Cardiac septum (tissue), 1 donor: ENCODE measurements at regions of chr20 and their contacts with region 1.

Region 1: GRCh38 chr20:40689943-40690835 is 1.2 kb upstream of the MAFB start:
- DNase-seq: peak; percentile 94

Region 2: DNA sequence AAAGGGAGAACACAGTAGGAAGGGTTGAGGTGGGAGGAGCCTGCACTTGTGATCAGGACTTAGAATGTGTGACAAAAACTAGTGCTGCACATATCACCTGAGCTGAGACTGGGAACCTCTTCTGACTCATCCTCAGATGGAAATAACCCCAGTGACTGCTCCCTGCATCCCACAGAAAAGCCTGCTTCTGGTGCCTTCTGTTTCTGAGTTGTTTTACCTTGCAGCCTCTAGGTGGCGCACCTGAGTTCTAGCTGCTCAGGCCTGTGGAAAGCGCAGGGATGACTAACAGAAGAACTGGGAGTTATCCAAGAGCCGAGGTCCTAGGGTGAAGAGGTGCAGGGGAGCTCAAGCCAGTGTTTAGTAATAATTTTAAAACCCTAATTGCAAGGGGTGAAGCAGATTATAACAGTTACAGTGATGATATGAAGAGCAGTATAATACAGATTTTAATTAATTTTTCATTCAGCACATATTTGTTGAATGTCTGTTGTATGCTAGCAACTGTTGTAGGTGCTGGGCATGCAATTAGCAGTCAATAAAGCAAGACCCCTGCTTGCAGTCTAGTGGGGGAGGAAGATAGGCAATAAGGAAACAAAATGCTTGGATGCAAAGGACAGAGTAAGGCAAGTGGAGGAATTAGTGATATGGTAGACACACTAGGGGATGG is 1425.5 kb before region 1 on chr20:
- intact Hi-C with region 1: loop called (anchors 5 kb)
- DNase-seq: no peak

Region 3: DNA sequence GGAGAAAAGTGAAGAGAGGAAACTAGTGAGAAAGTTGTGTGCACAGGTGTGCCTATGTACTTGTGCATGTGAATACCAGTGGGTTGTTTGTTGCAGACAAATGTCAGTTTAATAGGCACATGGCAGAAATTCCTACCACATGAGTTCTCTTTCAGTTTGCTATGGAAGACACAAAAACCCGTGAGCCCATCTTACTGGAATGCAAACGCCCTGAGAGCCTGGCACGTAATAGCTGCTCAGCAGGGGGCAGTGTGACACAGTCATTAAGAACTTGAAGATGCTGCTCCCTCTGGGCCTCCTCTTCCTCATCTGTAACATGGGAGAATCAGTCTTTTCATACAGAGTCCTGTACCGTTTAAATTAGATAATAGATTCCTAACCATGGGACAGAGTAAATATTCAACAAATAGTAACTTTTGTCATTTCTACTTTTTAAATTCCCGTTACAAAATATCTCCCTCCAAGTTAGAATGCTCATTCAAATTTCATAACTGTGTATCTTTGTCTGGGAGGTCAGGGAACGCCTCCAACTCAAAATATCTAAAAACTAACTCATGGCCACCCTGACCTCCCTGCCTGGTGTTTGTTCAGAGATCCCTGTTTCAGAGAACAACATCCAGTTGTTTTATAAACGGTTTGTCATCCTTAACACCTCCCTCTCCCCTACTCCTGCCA is 804.1 kb before region 1 on chr20:
- intact Hi-C with region 1: loop called (anchors 2 kb)
- DNase-seq: no peak

Region 4: DNA sequence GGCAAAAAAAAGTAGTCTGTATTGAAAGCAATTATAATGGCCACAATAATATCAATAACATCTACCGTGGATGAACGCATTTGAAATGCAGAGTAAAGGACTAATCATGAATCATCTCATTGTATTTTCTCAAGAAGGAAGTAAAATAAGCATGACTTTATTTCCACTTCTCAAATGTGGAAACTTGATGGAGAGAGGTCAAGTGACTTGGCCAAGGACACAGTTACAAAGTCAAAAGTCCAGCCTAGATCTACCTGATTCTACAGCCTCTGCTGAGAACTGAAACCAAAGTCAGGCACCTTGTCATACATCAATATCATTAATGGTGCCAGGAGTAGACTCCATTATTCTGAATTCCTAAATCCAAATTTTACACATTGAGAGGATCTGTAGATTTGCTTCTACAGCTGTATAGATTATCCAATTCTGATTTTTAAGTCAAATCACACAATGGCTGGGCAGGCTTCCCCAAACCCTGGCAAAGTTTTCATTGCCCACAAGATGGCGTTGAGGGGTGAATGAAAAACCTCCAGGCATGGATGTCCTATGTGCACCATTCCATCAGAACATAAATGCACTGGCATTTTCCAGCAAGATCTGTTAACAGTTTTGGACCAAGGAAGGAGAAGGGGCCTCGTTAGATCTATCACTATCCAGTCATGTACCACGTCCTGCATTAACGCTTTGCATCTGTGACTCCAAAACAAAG is 424.2 kb before region 1 on chr20:
- intact Hi-C with region 1: loop called (anchors 2 kb)
- DNase-seq: no peak